BJ (cell line): ENCODE measurements at regions of chr1 and their contacts with region 1.

Region 1: DNA sequence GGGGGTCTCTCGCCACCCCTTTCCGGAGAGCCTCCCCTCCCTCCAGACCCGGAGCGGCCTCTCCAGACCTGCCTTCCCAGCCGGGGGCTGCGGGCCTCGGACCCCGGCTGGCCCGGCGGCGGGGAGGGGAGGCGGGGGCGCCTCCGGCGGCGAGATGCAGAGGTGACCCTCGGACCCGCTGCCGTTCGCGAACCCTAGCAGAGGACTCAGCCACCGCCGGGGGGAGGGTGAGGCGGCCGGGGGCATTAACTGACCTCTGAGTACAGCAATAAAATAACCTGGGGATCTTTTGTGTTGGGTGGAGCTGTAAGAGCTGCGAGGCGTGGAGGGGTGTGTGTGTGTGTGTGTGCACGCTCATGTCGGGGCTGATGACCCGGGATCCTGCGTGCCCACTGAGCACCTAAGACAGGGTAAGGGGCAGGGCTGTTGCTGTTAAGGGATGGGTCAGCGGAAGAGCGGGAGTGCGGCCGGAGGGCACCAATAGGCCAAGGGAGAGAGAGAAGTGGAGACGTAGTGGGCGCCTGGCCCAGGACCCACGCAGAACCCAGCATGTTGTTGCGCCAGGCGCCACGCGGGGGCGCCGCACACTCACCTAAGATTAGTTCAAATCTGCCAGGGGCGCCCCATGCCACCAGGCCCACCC is 6.3 kb downstream of the HAPLN2 start:
- DNase-seq: no peak
- H3K4me3 ChIP-seq: no peak overlapping the region
- H3K27me3 ChIP-seq: peaks cover 29% of the 10 kb centered on the region
- CTCF ChIP-seq: peak; percentile 90

Region 2: GRCh38 chr1:156608036-156608674 is 17.4 kb before region 1 on chr1:
- CTCF ChIA-PET with region 1: interaction called, 15 read pairs
- POLR2A ChIA-PET with region 1: no interaction called
- DNase-seq: no peak
- H3K4me3 ChIP-seq: no peak overlapping the region
- H3K27me3 ChIP-seq: peaks cover 11% of the 10 kb centered on the region
- CTCF ChIP-seq: peak; percentile 85

Region 3: DNA sequence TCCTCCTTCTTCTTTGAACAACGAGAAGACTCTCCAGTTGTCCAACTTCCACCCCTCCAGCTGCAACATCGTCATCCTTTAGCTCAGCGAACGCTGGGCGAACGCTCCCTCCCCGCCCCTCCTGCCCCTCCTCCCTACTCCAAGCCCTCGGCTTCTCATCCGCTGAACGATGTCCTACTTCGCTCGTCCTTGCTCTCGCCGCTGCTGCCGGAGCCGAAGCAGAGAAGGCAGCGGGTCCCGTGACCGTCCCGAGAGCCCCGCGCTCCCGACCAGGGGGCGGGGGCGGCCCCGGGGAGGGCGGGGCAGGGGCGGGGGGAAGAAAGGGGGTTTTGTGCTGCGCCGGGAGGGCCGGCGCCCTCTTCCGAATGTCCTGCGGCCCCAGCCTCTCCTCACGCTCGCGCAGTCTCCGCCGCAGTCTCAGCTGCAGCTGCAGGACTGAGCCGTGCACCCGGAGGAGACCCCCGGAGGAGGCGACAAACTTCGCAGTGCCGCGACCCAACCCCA is 16.3 kb after region 1 on chr1 and contains the start of gene BCAN:
- CTCF ChIA-PET with region 1: interaction called, 32 read pairs
- POLR2A ChIA-PET with region 1: no interaction called
- DNase-seq: no peak
- H3K4me3 ChIP-seq: no peak within 1 kb of the TSS
- H3K27me3 ChIP-seq: peaks cover 80% of the 10 kb centered on the region
- CTCF ChIP-seq: no peak
- polyA plus RNA-seq, gene BCAN: 0.02 TPM in 1 of 2 replicates, not detected in the other

Region 4: DNA sequence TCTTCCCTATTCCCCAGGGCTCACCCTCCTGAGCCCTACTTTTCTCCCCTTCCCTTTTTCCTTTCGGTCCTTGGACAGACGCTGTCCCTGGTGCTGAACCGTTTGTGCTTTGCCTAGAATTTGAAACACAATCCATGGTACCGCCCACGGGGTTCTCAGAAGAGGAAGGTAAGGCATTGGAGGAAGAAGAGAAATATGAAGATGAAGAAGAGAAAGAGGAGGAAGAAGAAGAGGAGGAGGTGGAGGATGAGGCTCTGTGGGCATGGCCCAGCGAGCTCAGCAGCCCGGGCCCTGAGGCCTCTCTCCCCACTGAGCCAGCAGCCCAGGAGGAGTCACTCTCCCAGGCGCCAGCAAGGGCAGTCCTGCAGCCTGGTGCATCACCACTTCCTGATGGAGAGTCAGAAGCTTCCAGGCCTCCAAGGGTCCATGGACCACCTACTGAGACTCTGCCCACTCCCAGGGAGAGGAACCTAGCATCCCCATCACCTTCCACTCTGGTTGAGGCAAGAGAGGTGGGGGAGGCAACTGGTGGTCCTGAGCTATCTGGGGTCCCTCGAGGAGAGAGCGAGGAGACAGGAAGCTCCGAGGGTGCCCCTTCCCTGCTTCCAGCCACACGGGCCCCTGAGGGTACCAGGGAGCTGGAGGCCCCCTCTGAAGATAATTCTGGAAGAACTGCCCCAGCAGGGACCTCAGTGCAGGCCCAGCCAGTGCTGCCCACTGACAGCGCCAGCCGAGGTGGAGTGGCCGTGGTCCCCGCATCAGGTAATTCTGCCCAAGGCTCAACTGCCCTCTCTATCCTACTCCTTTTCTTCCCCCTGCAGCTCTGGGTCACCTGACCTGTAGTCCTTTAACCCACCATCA is 26.8 kb after region 1 on chr1:
- CTCF ChIA-PET with region 1: interaction called, 257 read pairs
- POLR2A ChIA-PET with region 1: no interaction called
- DNase-seq: no peak
- H3K4me3 ChIP-seq: no peak overlapping the region
- H3K27me3 ChIP-seq: peaks cover 41% of the 10 kb centered on the region
- CTCF ChIP-seq: no peak

Region 5: DNA sequence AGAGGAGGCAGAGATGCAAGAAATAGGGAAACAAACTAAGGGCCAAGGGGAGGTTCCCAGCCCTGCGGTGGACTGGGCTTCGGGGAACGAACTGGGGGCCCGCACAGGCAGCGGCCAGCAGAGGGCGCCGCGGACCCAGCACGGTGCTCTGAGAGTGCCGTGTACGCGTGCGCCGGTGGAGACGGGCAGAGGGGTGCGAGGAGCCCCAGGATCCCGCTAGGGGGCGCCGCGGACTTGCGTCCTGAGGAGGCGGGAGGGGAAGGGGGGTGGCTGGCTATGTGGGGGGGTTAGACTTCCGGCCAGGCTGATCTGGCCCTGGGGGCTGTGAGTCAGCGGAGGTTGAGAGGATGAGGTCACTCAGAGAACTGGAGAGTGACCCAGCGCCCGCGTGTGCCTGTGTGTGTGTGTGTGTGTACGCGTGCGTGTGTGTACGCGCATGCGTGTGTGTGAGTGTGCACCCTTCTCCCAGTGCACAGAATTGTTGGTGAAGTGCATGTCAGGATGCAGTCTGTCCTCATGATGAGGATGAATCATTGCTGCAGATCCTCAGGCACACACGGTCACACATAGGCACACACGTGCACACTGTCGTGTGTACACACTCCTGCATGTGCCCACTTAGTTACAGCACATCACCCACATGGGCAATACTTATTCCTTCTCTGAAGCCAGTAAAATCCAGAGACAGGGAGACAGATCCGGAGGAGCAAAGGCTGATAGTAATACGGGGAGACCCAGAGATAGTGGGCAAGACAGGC is 34.6 kb after region 1 on chr1:
- CTCF ChIA-PET with region 1: interaction called, 257 read pairs
- POLR2A ChIA-PET with region 1: no interaction called
- DNase-seq: peak; percentile 85
- H3K4me3 ChIP-seq: no peak overlapping the region
- H3K27me3 ChIP-seq: peaks cover 18% of the 10 kb centered on the region
- CTCF ChIP-seq: peak; percentile 100

Region 6: GRCh38 chr1:156677616-156678596 is 52.3 kb after region 1 on chr1:
- CTCF ChIA-PET with region 1: interaction called, 155 read pairs
- POLR2A ChIA-PET with region 1: no interaction called
- DNase-seq: no peak
- H3K4me3 ChIP-seq: peak overlapping the region; percentile 55
- H3K27me3 ChIP-seq: no peaks in the 10 kb centered on the region
- CTCF ChIP-seq: peak; percentile 93